Left ventricle myocardium inferior (tissue), 1 donor: ENCODE measurements at regions of chr7 and their contacts with region 1.

Region 1: GRCh38 chr7:121366852-121367431 is 29.2 kb downstream of the FAM3C start:
- DNase-seq: no peak
- H3K4me3 ChIP-seq: no peak overlapping the region
- H3K27ac ChIP-seq: no peak overlapping the region
- H3K4me1 ChIP-seq: peaks cover 13% of the 10 kb centered on the region
- H3K27me3 ChIP-seq: no peaks in the 10 kb centered on the region
- CTCF ChIP-seq: peak; percentile 87

Region 2: DNA sequence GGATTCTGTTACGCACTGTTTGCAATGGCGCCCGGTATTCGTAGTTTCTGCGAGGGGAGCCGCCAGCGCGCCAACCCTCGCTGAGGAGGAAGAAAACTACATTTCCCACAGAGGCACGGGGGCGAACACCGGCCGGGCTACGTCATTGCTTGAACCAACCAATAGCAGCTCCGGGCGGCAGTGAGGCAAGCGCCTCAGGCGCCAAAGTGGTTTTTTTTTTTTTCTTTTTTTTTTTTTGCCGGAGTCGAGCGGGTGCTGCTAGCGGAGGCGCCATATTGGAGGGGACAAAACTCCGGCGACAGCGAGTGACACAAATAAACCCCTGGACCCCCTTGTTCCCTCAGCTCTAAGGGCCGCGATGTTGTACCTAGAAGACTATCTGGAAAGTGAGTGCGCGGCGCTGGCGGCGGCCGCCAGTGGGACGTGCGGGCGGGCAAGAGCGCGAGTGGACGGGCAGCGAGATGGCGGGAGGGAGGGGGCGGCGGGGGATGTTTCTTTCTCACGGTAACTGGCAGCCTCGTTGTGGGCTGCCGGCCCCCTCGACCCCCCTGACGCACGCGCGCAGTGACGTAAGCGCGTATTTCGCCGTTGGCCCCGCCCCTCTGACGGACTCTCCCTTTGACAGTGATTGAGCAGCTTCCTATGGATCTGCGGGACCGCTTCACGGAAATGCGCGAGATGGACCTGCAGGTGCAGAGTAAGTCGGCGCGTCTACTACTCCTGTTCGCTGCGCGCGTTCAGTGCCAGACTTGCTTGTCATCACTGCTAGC is 416.2 kb before region 1 on chr7 and contains the start of gene ING3:
- intact Hi-C with region 1: no loop called
- DNase-seq: peak; percentile 96
- H3K4me3 ChIP-seq: peak within 1 kb of the TSS; percentile 75
- H3K27ac ChIP-seq: peak within 1 kb of the TSS; percentile 98
- H3K4me1 ChIP-seq: peaks cover 44% of the 10 kb centered on the region
- H3K27me3 ChIP-seq: no peaks in the 10 kb centered on the region
- CTCF ChIP-seq: no peak
- total RNA-seq, gene ING3: 13.4 TPM

Region 3: GRCh38 chr7:121480058-121480457 is 113.1 kb after region 1 on chr7:
- intact Hi-C with region 1: no loop called
- DNase-seq: no peak
- H3K4me3 ChIP-seq: no peak overlapping the region
- H3K27ac ChIP-seq: no peak overlapping the region
- H3K4me1 ChIP-seq: no peaks in the 10 kb centered on the region
- H3K27me3 ChIP-seq: no peaks in the 10 kb centered on the region
- CTCF ChIP-seq: no peak

Region 4: DNA sequence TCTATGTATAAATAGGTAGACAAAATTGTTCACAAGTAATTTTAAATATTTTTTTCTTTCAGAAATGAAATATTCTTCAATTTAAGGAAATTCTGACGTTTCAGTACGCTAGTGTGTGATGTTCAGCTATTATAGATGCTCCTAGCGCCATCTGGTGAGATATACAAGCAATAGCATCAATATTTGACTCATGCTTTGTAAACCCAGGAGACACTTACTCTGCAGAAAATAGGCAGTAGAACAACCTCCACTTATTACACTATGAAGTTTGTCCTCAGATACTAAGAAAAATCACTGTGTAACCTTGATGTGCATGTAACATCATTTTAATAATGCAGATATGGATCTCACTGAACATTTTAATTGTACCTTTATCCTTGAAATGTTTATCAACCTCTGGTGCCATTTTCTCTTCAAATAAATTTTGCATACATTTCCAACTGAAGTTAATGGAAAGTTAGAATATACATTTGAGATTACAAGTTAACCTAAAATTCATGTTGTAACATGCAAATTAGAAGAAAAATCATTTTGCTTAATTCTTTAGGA is 180.7 kb after region 1 on chr7:
- intact Hi-C with region 1: loop called (anchors 2 kb)
- DNase-seq: no peak
- H3K4me3 ChIP-seq: no peak overlapping the region
- H3K27ac ChIP-seq: no peak overlapping the region
- H3K4me1 ChIP-seq: no peaks in the 10 kb centered on the region
- H3K27me3 ChIP-seq: no peaks in the 10 kb centered on the region
- CTCF ChIP-seq: peak; percentile 87